ENCODE measurements at regions of chr17 and their contacts with region 1.

Region 1: DNA sequence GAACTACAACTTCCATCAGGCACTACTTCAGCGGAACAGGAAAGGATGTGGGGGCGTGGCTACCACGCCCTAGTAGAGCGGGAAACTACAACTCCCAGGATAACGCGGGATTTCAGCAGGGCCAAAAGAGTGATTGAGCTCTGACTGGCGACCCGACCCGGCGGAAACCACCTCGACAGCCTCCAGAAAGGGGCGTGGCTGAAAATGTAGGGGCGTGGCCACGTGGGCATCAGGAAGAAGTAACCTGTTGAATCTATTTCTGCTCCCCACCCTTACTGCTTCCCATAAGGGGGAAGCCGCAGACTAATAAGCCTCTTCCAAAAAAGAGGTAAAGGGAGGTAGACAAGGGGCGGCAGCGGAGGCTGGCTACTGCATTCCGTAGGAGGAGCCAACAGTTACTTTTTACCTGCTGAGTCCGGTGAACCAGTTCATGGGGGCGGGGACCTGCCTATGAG is at the start of gene TMEM102:
- DNase-seq: peak; percentile 88 to 94
- H3K4me3 ChIP-seq: peak within 1 kb of the TSS; percentile 29 to 30
- H3K27ac ChIP-seq: peak within 1 kb of the TSS; percentile 5 to 44
- H3K4me1 ChIP-seq: peaks cover 0 to 38% of the 10 kb centered on the region in 2 donors
- H3K27me3 ChIP-seq: peaks cover 0 to 22% of the 10 kb centered on the region in 2 donors
- CTCF ChIP-seq: no peak
- POLR2A ChIP-seq: no peak
- total RNA-seq, gene TMEM102: 0.29 to 2.8 (median 2.0) TPM in 3 of 4 donors, not detected in the other

Region 2: DNA sequence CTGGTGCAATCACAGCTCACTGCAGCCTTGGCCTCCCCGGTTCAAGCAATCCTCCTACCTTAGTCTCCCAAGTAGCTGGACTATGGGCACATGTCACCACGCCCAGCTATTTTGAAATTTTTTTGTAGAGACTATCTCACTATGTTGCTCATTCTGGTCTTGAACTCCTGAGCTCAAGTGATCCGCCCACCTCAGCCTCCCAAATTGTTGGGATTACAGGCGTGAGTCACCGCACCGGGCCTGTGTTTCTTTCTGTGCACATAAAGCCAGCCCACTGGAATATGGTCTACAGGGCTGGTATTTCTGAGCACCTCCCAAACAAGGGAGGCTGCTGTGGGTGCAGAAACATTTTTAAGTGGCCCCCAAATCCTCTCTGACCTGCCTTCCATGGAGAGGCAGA is 71.9 kb before region 1 on chr17:
- intact Hi-C with region 1: no loop called
- DNase-seq: no peak
- H3K4me3 ChIP-seq: no peak overlapping the region
- H3K27ac ChIP-seq: no peak overlapping the region
- H3K4me1 ChIP-seq: no peaks in the 10 kb centered on the region
- H3K27me3 ChIP-seq: no peaks in the 10 kb centered on the region
- CTCF ChIP-seq: no peak
- POLR2A ChIP-seq: no peak

Region 3: DNA sequence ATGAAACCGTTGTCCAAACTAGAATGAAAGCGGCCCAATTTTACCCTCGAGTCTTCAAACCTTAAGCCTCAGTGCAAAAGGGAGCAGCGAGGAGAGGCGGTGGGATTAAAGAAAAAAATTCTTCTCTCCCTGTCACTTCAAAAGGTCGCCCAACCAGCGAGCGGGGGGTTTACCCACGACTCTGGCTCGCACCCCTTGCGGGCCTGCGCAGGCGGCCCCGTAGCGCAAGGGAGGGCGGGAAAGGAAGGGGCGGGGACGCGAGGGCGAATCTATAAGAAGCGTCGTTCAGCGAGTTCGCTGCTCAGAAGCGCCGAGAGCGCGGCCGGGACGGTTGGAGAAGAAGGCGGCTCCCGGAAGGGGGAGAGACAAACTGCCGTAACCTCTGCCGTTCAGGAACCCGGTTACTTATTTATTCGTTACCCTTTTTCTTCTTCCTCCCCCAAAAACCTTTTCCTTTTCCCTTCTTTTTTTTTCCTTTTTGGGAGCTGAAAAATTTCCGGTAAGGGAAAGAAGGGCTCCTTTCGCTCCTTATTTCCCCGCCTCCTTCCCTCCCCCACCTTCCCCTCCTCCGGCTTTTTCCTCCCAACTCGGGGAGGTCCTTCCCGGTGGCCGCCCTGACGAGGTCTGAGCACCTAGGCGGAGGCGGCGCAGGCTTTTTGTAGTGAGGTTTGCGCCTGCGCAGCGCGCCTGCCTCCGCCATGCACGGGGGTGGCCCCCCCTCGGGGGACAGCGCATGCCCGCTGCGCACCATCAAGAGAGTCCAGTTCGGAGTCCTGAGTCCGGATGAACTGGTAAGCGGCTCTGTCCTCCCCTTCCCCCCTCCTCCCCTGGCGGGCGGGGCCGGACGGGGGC is 49.0 kb after region 1 on chr17 and contains the start of gene POLR2A:
- intact Hi-C with region 1: loop called (anchors 10 kb)
- DNase-seq: peak; percentile 99
- H3K4me3 ChIP-seq: peak within 1 kb of the TSS; percentile 64 to 74
- H3K27ac ChIP-seq: peak within 1 kb of the TSS; percentile 98 to 99
- H3K4me1 ChIP-seq: no peaks in the 10 kb centered on the region
- H3K27me3 ChIP-seq: no peaks in the 10 kb centered on the region
- CTCF ChIP-seq: peak in 2 of 4 experiments; percentile 6 to 32
- POLR2A ChIP-seq: peak; percentile 99 to 100
- total RNA-seq, gene POLR2A: 19.7 to 167 (median 77.6) TPM

Region 4: DNA sequence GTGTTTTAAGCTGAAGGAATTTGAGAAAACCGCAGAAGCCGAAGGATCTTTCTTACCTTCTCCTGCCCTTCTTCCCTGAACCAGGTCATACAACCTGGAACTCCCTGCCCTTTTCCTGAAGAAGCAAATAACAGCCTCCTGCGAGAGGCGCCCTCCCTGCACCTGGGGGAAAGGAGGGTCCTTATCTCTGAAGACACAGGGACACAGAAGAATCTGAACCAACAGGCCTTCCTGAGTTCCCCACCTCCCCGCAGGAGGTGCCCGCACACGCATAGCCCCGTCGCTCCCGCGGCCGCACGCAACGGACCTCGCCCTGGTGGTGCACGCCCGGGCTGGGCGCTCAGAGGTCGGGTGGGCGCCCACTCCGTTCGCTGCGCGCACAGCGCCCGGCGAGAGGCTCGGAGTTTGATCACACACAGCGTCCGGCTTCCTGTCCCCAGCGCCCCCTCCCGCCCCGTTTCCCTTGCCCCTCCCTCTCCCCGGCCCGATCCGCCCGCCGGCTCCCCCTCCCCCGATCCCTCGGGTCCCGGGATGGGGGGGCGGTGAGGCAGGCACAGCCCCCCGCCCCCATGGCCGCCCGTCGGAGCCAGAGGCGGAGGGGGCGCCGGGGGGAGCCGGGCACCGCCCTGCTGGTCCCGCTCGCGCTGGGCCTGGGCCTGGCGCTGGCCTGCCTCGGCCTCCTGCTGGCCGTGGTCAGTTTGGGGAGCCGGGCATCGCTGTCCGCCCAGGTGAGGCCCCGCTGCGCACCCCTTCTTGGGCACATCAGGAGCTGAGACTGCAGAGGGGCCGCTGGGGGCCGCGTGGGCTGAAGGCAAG is 113.5 kb after region 1 on chr17 and contains the start of gene TNFSF12:
- intact Hi-C with region 1: no loop called
- DNase-seq: peak; percentile 66 to 68
- H3K4me3 ChIP-seq: peak within 1 kb of the TSS; percentile 47 to 88
- H3K27ac ChIP-seq: peak within 1 kb of the TSS; percentile 89 to 95
- H3K4me1 ChIP-seq: peaks cover 0 to 5% of the 10 kb centered on the region in 2 donors
- H3K27me3 ChIP-seq: no peaks in the 10 kb centered on the region
- CTCF ChIP-seq: peak in 3 of 4 experiments; percentile 7 to 44 (median 31)
- POLR2A ChIP-seq: peak in 1 of 2 donors; percentile 9
- total RNA-seq, gene TNFSF12: 15.3 to 63.1 (median 33.7) TPM